Activated T-helper 1 cell treated with anti-CD3 and anti-CD28 coated beads, Interleukin-12 subunit alpha, Interleukin-12 subunit beta, Interleukin-2, Interleukin-4 antibody, amounts not matched to agents 30 ng/mL and 10 ng/mL and 1 ng/mL, durations not matched to agents 14 hours and 24 hours and 36 hours (primary cell): ENCODE measurements at regions of chr11 and their contacts with region 1.

Region 1: GRCh38 chr11:96396637-96397036 is 6.8 kb downstream of the JRKL start:
- DNase-seq: no peak
- H3K4me3 Mint-ChIP-seq: no peak overlapping the region
- H3K27ac Mint-ChIP-seq: no peak overlapping the region
- H3K4me1 Mint-ChIP-seq: peaks cover 15% of the 10 kb centered on the region
- H3K27me3 Mint-ChIP-seq: peaks cover 2% of the 10 kb centered on the region

Region 2: GRCh38 chr11:95968585-95968984 is 428.1 kb before region 1 on chr11:
- intact Hi-C with region 1: loop called (anchors 5 kb)
- DNase-seq: no peak
- H3K4me3 Mint-ChIP-seq: no peak overlapping the region
- H3K27ac Mint-ChIP-seq: no peak overlapping the region
- H3K4me1 Mint-ChIP-seq: no peaks in the 10 kb centered on the region
- H3K27me3 Mint-ChIP-seq: peaks cover 3% of the 10 kb centered on the region

Region 3: DNA sequence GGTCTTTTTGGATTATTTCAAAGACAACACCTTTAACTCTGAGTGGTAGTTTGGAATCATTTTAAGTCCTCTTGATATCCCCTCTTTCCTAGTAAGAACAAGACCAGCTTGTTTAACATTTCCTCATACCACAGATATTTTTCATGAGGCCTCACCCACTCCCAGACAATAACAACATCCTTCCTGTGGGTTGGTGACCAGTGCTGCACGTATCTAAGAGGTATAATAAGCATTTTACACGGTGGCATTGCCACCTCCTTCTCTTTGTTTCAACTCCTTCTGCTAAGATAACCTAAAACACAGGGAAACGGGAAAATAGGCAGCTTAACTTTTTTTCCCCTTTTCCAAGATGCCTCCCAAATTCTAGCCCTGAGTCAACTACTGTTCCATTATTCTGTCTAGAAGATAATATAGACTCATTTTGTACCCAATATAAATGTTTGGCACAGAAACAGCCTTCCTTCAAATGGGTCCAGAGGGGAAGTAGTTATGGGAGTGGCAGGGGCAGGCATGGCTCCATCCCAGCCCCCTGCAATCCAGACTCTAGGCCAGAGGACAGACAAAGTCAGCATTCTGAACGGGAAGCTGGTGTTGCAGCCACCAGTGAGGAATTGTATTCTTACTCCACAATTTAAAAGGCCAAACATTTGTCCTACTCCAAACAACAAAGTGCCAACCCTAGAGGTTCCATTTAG is 82.2 kb before region 1 on chr11:
- intact Hi-C with region 1: no loop called
- DNase-seq: no peak
- H3K4me3 Mint-ChIP-seq: peak overlapping the region; percentile 1
- H3K27ac Mint-ChIP-seq: peak overlapping the region; percentile 24
- H3K4me1 Mint-ChIP-seq: peaks cover 53% of the 10 kb centered on the region
- H3K27me3 Mint-ChIP-seq: no peaks in the 10 kb centered on the region

Region 4: DNA sequence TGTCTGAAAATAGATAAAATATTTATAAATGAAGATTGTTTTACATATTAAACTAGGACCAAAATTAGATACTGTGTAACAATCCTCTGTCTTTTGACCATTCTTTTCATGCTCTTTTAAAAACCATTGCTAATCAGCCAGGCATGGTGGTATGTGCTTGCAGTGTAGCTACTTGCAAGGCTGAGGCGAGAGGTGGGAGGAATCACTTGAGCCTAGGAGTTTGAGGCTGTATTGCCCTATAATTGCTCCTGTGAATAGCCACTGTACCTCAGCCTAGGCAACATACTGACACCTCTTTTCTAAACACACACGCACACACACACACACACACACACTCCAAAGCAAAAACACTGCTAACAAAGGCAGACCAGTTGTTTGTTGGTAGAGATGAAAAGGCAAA is 252.4 kb after region 1 on chr11:
- intact Hi-C with region 1: no loop called
- DNase-seq: no peak
- H3K4me3 Mint-ChIP-seq: no peak overlapping the region
- H3K27ac Mint-ChIP-seq: no peak overlapping the region
- H3K4me1 Mint-ChIP-seq: no peaks in the 10 kb centered on the region
- H3K27me3 Mint-ChIP-seq: no peaks in the 10 kb centered on the region